ENCODE measurements at regions of chr5 and their contacts with region 1.

Region 1: DNA sequence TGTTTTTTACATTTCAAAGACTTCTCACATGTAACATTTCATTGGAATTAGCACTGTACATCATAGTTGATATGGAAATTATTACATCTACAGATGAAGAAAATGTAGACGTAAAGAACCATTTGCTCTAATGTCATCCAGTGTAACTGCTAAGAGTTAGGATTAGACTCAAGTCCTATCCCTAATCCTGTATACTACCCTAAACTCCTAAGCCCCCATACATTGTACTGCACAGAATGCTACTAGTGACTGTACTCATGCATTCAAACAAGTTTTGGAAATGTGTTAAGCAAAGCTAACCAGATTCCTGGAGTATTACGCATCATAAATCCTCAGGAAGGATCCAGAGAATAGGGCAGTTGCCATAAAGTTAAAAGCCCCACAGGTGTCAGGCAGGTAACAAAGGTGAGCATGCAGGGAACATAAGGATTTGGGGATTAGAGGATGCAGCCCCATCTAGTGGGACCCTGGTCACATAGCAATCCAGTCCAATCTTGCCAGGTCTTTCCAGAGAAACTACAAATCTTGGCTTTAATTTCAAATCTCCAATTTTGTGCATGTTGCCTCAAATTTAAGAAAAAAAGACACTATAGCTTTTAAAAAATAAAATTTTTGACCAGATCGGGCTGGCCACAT is 32.0 kb downstream of the HAVCR1 start:
- DNase-seq: no peak
- H3K4me3 Mint-ChIP-seq: no peak overlapping the region
- H3K27ac Mint-ChIP-seq: peak overlapping the region; percentile 90
- H3K4me1 Mint-ChIP-seq: peaks cover 81% of the 10 kb centered on the region
- H3K27me3 Mint-ChIP-seq: peaks cover 3% of the 10 kb centered on the region

Region 2: DNA sequence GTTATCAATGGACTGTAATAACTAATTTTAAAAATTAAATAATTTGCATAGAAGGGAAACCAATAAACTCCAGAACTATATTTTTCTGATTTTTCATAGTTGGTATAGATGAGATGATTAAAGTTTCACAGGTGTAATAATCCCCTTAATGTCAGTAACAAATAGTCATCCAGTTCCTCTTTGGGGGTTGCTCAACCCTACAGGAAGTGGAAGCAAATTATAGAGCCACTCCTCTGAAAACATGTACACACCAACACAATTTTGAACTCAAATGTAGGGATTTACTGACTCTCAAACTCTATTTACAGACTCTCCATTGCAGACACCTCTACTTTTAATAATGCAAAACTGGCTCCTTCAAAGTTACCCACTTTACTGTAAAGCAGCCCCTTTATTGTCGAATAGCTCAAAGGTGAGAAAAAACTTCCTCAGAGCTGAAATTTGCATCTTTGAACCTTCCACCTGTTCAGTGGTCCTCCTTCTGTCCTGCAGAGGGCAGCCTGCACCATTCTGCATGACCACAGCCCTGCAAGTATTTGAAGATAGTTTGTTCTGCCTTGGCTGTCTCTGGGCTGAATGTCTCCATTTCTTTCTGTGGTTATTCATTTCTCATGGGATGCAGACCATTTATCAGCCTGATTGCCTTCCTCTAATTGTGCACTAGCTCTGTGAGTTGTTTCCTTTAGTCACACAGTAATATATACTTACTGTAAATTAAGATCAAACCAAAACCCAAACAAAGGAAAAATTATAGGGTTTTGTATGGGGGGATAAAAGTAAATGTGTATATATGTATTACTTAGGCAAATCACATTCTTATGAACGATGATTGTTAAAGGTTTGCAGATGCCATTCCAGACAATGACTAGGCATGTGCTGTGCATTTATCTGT is 1083.1 kb before region 1 on chr5:
- intact Hi-C with region 1: loop called (anchors 2 kb)
- DNase-seq: peak; percentile 19
- H3K4me3 Mint-ChIP-seq: no peak overlapping the region
- H3K27ac Mint-ChIP-seq: no peak overlapping the region
- H3K4me1 Mint-ChIP-seq: peaks cover 7% of the 10 kb centered on the region
- H3K27me3 Mint-ChIP-seq: peaks cover 14% of the 10 kb centered on the region

Region 3: DNA sequence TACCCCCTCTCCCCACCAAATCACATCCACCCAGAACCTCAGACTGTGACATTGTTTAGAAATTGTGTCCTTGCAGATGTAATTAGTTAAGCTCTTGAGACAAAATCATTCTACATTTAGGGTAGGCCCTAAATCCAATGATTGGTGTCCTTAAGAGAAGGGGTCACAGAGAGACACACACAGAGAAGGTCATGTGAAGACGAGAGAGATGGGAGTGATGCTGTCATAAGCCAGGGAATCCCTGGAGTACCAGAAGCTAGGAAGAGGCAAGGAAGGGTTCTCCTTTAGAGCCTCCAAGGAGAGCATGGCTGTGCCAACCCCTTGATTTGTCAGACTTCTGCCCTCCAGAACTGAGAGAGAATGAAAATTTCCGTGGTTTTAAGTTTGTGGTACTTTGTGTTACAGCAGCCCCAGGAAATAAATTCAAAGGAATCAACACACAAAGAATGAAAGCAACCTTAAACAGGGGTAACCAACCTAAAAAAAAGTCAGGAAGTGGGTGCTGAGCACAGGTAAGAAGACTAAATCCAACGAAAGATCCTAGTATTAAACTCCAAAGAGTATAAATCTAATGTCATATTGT is 97.5 kb before region 1 on chr5:
- intact Hi-C with region 1: loop called (anchors 1 kb)
- DNase-seq: peak; percentile 24
- H3K4me3 Mint-ChIP-seq: no peak overlapping the region
- H3K27ac Mint-ChIP-seq: peak overlapping the region; percentile 98
- H3K4me1 Mint-ChIP-seq: peaks cover 100% of the 10 kb centered on the region
- H3K27me3 Mint-ChIP-seq: no peaks in the 10 kb centered on the region

Region 4: DNA sequence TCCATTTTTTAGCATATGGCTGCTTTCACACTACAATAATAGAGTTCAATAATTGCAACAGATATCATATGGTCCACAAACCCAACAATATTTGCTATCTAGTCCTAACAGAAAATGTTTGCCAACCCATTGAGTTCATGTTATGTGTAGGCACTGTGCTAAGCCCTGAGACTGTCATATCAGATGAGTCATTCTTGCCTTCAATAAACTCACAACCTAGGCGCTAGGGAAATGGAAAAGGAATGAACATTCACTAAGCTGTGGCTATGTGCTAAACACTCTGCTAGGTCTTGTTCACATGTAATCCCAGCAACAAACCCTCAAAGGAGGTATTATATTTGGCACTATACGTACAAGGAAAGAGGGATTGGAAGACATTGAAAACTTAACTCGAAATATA is 55.5 kb before region 1 on chr5:
- intact Hi-C with region 1: loop called (anchors 1 kb)
- DNase-seq: no peak
- H3K4me3 Mint-ChIP-seq: no peak overlapping the region
- H3K27ac Mint-ChIP-seq: peak overlapping the region; percentile 77
- H3K4me1 Mint-ChIP-seq: peaks cover 25% of the 10 kb centered on the region
- H3K27me3 Mint-ChIP-seq: peaks cover 2% of the 10 kb centered on the region

Region 5: GRCh38 chr5:157076558-157076957 is 49.7 kb after region 1 on chr5:
- intact Hi-C with region 1: loop called (anchors 1 kb)
- DNase-seq: no peak
- H3K4me3 Mint-ChIP-seq: peak overlapping the region; percentile 15
- H3K27ac Mint-ChIP-seq: peak overlapping the region; percentile 53
- H3K4me1 Mint-ChIP-seq: peaks cover 55% of the 10 kb centered on the region
- H3K27me3 Mint-ChIP-seq: no peaks in the 10 kb centered on the region

Region 6: DNA sequence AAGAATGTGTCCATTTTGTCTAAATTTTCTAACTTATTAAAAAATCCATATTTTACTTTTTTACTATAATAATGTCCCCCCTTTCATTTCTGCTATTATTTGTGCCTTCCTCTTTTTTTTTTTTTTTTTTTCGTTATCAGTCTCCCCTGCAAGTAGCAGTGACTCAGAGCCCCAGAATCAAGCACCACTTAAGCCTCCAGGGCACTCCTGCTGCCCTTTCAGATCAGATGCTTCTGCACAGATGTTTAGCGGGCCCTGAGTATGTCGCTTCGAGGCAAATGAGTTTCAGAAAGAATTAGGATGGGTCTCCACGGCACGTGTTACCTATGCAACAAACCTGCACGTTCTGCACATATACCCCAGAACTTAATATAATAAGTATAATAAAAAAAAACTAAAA is 104.0 kb after region 1 on chr5:
- intact Hi-C with region 1: loop called (anchors 1 kb)
- DNase-seq: no peak
- H3K4me3 Mint-ChIP-seq: no peak overlapping the region
- H3K27ac Mint-ChIP-seq: no peak overlapping the region
- H3K4me1 Mint-ChIP-seq: peaks cover 41% of the 10 kb centered on the region
- H3K27me3 Mint-ChIP-seq: no peaks in the 10 kb centered on the region

Region 7: DNA sequence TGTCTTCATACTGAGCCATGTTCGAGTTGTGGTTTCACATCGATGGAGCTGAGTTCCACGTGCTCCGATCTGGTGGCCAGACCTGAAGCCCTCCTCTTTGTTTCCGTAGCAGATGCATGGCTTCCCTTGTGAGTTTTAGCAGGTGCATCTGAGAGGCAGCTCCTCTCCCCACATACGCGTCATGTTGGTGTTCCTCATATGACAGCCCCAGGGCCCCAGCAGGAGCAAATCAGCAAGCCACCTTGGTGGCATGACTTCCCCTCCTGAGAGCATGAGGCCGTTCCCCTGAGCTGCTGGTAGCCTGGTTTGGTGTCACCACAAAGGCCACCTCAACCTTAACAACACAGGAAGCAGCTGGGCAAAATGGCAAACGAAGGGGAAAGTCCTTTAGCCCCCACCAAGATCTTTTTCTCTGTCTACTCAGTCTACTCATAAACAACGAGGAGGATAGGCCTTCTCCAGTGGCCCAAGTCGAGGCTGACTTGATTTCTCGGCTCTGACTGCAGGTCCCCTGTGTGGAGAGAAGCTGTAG is 244.9 kb after region 1 on chr5:
- intact Hi-C with region 1: loop called (anchors 5 kb)
- DNase-seq: peak; percentile 85
- H3K4me3 Mint-ChIP-seq: peak overlapping the region; percentile 74
- H3K27ac Mint-ChIP-seq: peak overlapping the region; percentile 100
- H3K4me1 Mint-ChIP-seq: peaks cover 96% of the 10 kb centered on the region
- H3K27me3 Mint-ChIP-seq: no peaks in the 10 kb centered on the region